ENCODE measurements at regions of chr1 and their contacts with region 1.

Region 1: DNA sequence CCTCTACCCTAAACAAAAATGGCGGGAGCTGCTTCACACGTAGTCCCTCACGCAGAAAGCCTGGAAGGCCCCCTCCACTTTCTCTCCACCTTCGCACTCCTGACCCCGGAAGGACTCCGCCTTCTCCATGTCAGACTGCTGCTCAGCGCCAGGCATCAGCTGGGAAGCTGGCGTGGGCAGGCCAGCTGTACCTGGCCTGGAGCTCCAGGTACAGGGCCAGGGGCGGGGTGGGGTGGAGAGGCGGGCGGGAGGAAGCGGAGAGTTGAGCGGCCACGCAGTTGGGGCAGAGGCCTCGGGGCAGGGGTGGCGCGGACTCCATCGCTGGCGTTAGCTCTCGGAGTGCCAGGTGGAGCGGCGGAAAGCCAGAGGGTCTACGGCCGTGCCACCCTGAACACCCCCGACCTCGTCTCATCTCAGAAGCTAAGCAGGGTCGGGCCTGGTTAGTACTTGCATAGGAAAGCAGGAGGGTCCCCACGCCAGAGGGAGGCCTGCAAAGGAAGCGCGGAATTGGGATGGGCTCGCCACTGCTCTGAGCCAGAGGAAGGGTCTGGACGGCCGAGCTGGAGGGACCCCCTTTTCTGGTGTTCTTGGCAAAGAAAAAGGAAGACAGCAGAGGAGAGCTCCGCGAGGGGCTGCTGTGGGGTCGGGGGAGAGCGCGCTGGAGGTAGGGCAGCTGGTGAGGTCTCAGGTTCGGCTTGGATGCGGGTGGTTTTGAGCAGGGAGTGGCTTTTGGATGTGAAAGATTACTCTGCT is at the start of gene MIGA1:
- DNase-seq: peak; percentile 90
- H3K4me3 ChIP-seq: peak within 1 kb of the TSS; percentile 45 to 98 (median 71)
- H3K27ac ChIP-seq: peak within 1 kb of the TSS; percentile 13
- H3K4me1 ChIP-seq: peaks cover 10% of the 10 kb centered on the region
- H3K27me3 ChIP-seq: no peaks in the 10 kb centered on the region
- CTCF ChIP-seq: no peak
- POLR2A ChIP-seq: peak; percentile 13
- total RNA-seq, gene MIGA1: 13.7 and 14.6 TPM in 2 replicates

Region 2: GRCh38 chr1:77796695-77797416 is 17.2 kb after region 1 on chr1:
- CTCF ChIA-PET with region 1: interaction called, 8 read pairs
- POLR2A ChIA-PET with region 1: no interaction called
- dilution Hi-C with region 1: no loop called
- intact Hi-C with region 1: loop called (anchors 1 kb)
- DNase-seq: peak; percentile 92
- H3K4me3 ChIP-seq: no peak overlapping the region
- H3K27ac ChIP-seq: peak overlapping the region; percentile 15
- H3K4me1 ChIP-seq: peaks cover 22% of the 10 kb centered on the region
- H3K27me3 ChIP-seq: no peaks in the 10 kb centered on the region
- CTCF ChIP-seq: no peak
- POLR2A ChIP-seq: peak; percentile 44